Activated CD4-positive, alpha-beta memory T cell treated with anti-CD3 and anti-CD28 coated beads for 36 hours (primary cell): ENCODE measurements at regions of chr4 and their contacts with region 1.

Region 1: DNA sequence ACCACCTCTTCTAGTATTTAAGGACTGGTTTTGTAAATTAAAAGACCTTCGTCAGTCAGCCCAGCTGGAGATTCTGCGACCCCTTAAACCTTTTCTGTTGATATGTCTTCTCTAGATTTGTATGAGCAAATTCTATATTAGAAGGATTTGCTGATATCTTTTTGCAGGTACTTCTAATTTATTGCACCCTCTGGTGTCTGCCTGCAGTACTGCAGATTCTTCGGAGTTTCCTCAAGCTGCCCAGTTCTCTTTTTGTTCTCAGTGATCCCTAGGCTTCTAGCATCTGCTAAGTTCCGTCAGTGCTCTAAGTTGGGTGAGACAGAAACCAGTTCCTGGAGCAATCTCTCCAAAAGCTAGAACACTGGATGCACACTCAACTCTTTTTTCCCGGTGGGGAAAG is 545.2 kb downstream of the C4orf33 start:
- DNase-seq: peak; percentile 33
- H3K4me3 Mint-ChIP-seq: no peak overlapping the region
- H3K27ac Mint-ChIP-seq: no peak overlapping the region
- H3K4me1 Mint-ChIP-seq: no peaks in the 10 kb centered on the region
- H3K27me3 Mint-ChIP-seq: no peaks in the 10 kb centered on the region

Region 2: GRCh38 chr4:128191115-128191781 is 1449.9 kb before region 1 on chr4:
- CTCF ChIA-PET with region 1: no interaction called
- POLR2A ChIA-PET with region 1: no interaction called
- intact Hi-C with region 1: loop called (anchors 5 kb)
- DNase-seq: peak; percentile 80
- H3K4me3 Mint-ChIP-seq: no peak overlapping the region
- H3K27ac Mint-ChIP-seq: no peak overlapping the region
- H3K4me1 Mint-ChIP-seq: peaks cover 3% of the 10 kb centered on the region
- H3K27me3 Mint-ChIP-seq: no peaks in the 10 kb centered on the region

Region 3: GRCh38 chr4:129362674-129363274 is 278.4 kb before region 1 on chr4:
- CTCF ChIA-PET with region 1: interaction called, 37 read pairs
- POLR2A ChIA-PET with region 1: no interaction called
- intact Hi-C with region 1: loop called (anchors 1 kb)
- DNase-seq: peak; percentile 35
- H3K4me3 Mint-ChIP-seq: no peak overlapping the region
- H3K27ac Mint-ChIP-seq: no peak overlapping the region
- H3K4me1 Mint-ChIP-seq: no peaks in the 10 kb centered on the region
- H3K27me3 Mint-ChIP-seq: peaks cover 5% of the 10 kb centered on the region

Region 4: GRCh38 chr4:130163701-130164100 is 522.5 kb after region 1 on chr4:
- CTCF ChIA-PET with region 1: no interaction called
- POLR2A ChIA-PET with region 1: no interaction called
- intact Hi-C with region 1: no loop called
- DNase-seq: no peak
- H3K4me3 Mint-ChIP-seq: no peak overlapping the region
- H3K27ac Mint-ChIP-seq: no peak overlapping the region
- H3K4me1 Mint-ChIP-seq: no peaks in the 10 kb centered on the region
- H3K27me3 Mint-ChIP-seq: no peaks in the 10 kb centered on the region